ENCODE measurements at regions of chr4 and their contacts with region 1.

Region 1: DNA sequence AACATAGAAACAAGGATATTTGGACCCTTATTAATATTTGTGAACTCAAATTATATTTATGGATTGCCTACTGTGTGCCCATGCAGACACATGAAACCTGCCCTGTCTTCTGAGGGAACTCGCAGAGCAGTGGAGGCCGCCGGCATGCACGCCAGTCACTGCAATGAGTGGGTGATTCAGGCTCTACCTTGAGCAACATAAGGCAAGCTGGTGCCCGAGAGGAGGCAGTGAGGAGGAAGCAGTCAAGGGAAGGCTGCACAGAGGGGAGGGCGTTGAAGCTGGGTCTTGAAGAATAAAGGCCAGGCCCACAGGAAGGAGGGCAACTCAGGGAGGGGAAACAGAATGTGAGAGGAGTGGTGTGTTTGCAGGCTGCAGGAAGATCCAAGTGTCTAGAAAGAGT is 52.8 kb downstream of the PPEF2 start:
- DNase-seq: no peak
- H3K4me3 Mint-ChIP-seq: no peak overlapping the region
- H3K27ac Mint-ChIP-seq: no peak overlapping the region
- H3K4me1 Mint-ChIP-seq: peaks cover 3% of the 10 kb centered on the region
- H3K27me3 Mint-ChIP-seq: peaks cover 2% of the 10 kb centered on the region

Region 2: DNA sequence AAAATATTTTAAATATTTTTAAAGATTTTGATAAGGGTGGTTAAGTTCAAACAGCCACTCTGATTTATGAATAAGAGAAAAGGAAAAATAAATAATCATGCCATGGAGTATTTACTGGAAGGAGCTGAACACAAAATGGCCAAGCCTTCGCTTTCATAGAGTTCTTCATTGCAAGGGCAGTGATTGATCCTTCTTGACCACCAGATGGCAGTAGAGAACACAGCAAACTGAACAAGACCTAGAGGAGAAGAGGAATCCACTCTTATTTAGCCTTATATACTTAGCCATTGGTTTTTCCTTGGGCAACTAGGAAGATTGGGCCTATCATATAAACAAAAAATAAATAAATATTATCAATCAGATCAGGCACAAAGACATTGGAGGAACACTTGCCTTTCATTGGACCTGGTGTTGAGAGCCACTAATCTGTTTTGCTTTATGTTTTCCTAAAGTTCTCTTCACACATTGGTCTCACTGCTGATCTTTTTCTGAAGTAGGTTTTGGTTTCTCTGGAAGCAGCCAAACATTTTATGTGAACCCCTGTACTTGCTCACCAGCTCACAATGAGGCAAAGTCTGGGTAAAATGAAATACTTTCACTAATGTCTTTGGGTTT is 974.6 kb before region 1 on chr4:
- CTCF ChIA-PET with region 1: interaction called, 3 read pairs
- intact Hi-C with region 1: loop called (anchors 1 kb)
- DNase-seq: peak; percentile 39
- H3K4me3 Mint-ChIP-seq: no peak overlapping the region
- H3K27ac Mint-ChIP-seq: no peak overlapping the region
- H3K4me1 Mint-ChIP-seq: no peaks in the 10 kb centered on the region
- H3K27me3 Mint-ChIP-seq: peaks cover 12% of the 10 kb centered on the region

Region 3: GRCh38 chr4:74932816-74933561 is 916.5 kb before region 1 on chr4 and contains the start of gene PARM1:
- CTCF ChIA-PET with region 1: no interaction called
- intact Hi-C with region 1: loop called (anchors 1 kb)
- DNase-seq: peak; percentile 70
- H3K4me3 Mint-ChIP-seq: peak within 1 kb of the TSS; percentile 54
- H3K27ac Mint-ChIP-seq: no peak within 1 kb of the TSS
- H3K4me1 Mint-ChIP-seq: peaks cover 18% of the 10 kb centered on the region
- H3K27me3 Mint-ChIP-seq: peaks cover 54% of the 10 kb centered on the region
- total RNA-seq, gene PARM1: 0.05 TPM in 1 of 2 experiments, not detected in the other

Region 4: GRCh38 chr4:75565481-75565880 is 284.0 kb before region 1 on chr4:
- CTCF ChIA-PET with region 1: interaction called, 12 read pairs
- intact Hi-C with region 1: no loop called
- DNase-seq: no peak
- H3K4me3 Mint-ChIP-seq: no peak overlapping the region
- H3K27ac Mint-ChIP-seq: no peak overlapping the region
- H3K4me1 Mint-ChIP-seq: no peaks in the 10 kb centered on the region
- H3K27me3 Mint-ChIP-seq: peaks cover 7% of the 10 kb centered on the region

Region 5: DNA sequence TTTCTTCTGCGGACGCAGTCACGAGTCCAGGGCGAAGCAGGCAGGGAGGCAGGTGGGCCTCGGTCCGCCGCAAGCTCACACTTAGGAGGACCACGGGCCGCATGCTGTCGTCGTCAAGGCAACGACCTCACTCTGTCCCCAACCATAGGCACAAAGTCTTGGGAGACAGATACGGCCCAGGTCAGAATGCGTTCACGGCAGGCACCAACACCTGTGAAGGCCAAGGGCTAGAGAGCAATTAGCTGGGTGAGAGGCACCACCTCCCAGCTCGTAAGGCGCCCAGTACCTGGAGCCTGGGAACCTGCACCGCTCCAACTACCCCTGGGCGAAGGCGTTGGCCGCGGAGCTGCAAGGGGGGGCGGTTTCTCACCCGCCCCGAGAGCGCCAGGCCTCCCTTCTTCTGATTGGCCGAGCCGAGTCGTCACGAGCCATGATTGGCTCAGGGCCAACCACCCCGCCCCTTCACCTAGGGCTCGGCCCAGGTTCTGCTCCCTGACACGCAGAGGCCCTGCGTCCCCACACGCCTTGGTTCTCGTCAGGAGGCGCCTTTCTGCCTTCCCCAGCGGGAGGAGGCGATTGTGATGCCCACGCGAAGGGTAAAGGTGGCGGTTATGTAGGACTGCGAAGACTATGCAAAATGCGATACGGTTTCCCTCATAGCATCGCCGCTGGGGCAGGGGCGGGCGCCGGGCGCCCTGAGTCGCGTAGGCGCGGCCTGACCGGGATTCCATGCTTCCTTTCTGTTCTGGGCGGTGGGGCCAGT is 219.1 kb before region 1 on chr4 and contains the start of gene CDKL2:
- CTCF ChIA-PET with region 1: no interaction called
- intact Hi-C with region 1: loop called (anchors 2 kb)
- DNase-seq: peak; percentile 91
- H3K4me3 Mint-ChIP-seq: peak within 1 kb of the TSS; percentile 72
- H3K27ac Mint-ChIP-seq: no peak within 1 kb of the TSS
- H3K4me1 Mint-ChIP-seq: peaks cover 5% of the 10 kb centered on the region
- H3K27me3 Mint-ChIP-seq: no peaks in the 10 kb centered on the region
- total RNA-seq, gene CDKL2: 0.79 to 1.2 TPM

Region 6: DNA sequence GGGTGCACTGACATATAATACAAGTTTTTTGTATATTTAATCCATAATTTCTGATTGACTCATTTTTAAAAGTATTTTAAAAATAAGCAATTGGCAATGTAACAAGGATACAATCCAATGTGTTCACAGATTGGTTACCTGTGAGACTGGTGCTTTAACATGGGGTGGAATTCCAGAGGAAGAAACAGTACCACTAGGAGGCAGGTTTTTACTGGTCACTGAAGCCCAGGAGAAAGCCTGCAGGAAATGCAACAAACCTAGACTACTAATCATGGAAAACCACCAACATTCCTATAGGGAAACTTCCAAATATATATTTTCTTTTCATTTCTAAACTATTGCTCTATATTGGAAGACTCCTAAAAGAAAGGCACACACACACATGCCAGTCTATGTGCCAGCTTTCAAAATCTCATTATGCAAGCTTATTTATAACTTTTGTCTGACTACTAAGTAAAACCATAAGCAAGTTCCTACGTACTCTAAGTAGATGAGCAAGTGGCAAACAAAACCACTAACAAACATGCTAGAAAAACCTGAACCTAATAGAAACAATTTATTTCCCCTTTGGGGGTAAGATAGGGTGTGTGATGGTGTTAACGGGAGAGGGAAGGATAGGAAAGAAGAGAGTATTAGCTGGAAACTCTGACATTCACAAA is 195.5 kb before region 1 on chr4:
- CTCF ChIA-PET with region 1: no interaction called
- intact Hi-C with region 1: loop called (anchors 1 kb)
- DNase-seq: no peak
- H3K4me3 Mint-ChIP-seq: no peak overlapping the region
- H3K27ac Mint-ChIP-seq: peak overlapping the region; percentile 78
- H3K4me1 Mint-ChIP-seq: peaks cover 43% of the 10 kb centered on the region
- H3K27me3 Mint-ChIP-seq: no peaks in the 10 kb centered on the region

Region 7: GRCh38 chr4:75708218-75708691 is 141.2 kb before region 1 on chr4:
- CTCF ChIA-PET with region 1: interaction called, 5 read pairs
- intact Hi-C with region 1: loop called (anchors 5 kb)
- DNase-seq: peak; percentile 58
- H3K4me3 Mint-ChIP-seq: no peak overlapping the region
- H3K27ac Mint-ChIP-seq: no peak overlapping the region
- H3K4me1 Mint-ChIP-seq: peaks cover 3% of the 10 kb centered on the region
- H3K27me3 Mint-ChIP-seq: no peaks in the 10 kb centered on the region